Activated CD4-positive, alpha-beta T cell treated with anti-CD3 and anti-CD28 coated beads, Interleukin-2, amount 10 ng/mL, durations not matched to agents 24 days and 14 days (primary cell): ENCODE measurements at regions of chrX and their contacts with region 1.

Region 1: GRCh38 chrX:20309806-20310205 is 43.1 kb upstream of the RPS6KA3 start:
- DNase-seq: no peak
- H3K4me3 Mint-ChIP-seq: no peak overlapping the region
- H3K27ac Mint-ChIP-seq: no peak overlapping the region
- H3K4me1 Mint-ChIP-seq: no peaks in the 10 kb centered on the region
- H3K27me3 Mint-ChIP-seq: peaks cover 7% of the 10 kb centered on the region

Region 2: GRCh38 chrX:20181598-20182329 is 128.0 kb before region 1 on chrX:
- intact Hi-C with region 1: no loop called
- DNase-seq: no peak
- H3K4me3 Mint-ChIP-seq: no peak overlapping the region
- H3K27ac Mint-ChIP-seq: peak overlapping the region; percentile 78
- H3K4me1 Mint-ChIP-seq: peaks cover 14% of the 10 kb centered on the region
- H3K27me3 Mint-ChIP-seq: no peaks in the 10 kb centered on the region

Region 3: DNA sequence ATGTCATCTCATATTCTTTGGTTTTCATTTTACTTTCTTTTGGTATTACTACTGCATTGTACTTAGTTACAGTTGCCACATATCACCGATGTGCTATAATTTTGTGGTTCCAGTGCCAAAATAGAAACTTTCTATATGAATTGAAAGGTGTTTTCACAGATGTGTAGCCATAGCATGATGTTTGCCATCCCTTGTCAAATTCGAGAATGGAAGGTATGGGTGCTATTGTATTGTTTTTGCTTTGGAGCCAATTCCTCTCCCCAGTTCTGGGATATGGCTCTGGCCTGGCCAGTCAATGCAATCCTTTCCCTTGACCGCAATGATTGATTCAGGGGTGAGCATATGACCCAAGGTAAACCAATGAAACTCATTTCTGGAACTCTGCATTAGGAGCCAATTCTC is 43.1 kb after region 1 on chrX:
- intact Hi-C with region 1: no loop called
- DNase-seq: no peak
- H3K4me3 Mint-ChIP-seq: no peak overlapping the region
- H3K27ac Mint-ChIP-seq: no peak overlapping the region
- H3K4me1 Mint-ChIP-seq: peaks cover 4% of the 10 kb centered on the region
- H3K27me3 Mint-ChIP-seq: no peaks in the 10 kb centered on the region

Region 4: GRCh38 chrX:20382518-20383297 is 72.9 kb after region 1 on chrX:
- intact Hi-C with region 1: loop called (anchors 10 kb)
- DNase-seq: peak; percentile 58
- H3K4me3 Mint-ChIP-seq: peak overlapping the region; percentile 5
- H3K27ac Mint-ChIP-seq: peak overlapping the region; percentile 70
- H3K4me1 Mint-ChIP-seq: peaks cover 16% of the 10 kb centered on the region
- H3K27me3 Mint-ChIP-seq: peaks cover 2% of the 10 kb centered on the region

Region 5: DNA sequence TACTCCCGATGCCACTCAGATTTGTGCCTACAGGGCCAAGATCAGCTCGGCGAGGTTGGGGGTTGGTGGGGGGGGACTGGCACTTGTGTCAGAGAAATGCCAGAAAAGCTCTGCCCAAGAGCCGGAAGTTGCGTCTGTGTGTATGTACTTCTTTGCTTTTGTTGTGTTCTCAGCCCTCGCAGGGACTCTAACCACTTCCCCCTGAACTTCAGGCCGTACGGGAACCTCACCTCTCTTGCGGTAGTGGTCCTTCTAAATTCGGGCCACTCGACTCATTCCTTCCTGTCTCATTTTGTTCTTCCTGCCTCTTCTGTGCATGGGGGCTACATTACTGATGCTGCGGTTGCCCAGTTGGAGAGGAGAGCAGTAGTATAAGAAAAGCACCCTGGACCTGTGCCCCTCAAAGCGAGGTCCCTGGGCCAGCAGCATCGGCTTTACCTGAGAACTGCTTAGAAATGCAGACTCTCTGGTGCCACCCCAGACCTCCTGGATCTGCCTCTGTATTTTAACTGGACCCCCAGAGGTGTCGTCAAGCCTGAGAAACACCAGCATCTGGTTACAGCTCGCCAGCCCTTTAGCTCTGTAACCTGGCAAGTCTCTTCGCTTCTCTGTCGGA is 103.2 kb after region 1 on chrX:
- intact Hi-C with region 1: no loop called
- DNase-seq: peak; percentile 81
- H3K4me3 Mint-ChIP-seq: peak overlapping the region; percentile 60
- H3K27ac Mint-ChIP-seq: peak overlapping the region; percentile 87
- H3K4me1 Mint-ChIP-seq: peaks cover 24% of the 10 kb centered on the region
- H3K27me3 Mint-ChIP-seq: no peaks in the 10 kb centered on the region